Activated CD4-positive, alpha-beta T cell treated with anti-CD3 and anti-CD28 coated beads for 36 hours (primary cell): ENCODE measurements at regions of chr1 and their contacts with region 1.

Region 1: DNA sequence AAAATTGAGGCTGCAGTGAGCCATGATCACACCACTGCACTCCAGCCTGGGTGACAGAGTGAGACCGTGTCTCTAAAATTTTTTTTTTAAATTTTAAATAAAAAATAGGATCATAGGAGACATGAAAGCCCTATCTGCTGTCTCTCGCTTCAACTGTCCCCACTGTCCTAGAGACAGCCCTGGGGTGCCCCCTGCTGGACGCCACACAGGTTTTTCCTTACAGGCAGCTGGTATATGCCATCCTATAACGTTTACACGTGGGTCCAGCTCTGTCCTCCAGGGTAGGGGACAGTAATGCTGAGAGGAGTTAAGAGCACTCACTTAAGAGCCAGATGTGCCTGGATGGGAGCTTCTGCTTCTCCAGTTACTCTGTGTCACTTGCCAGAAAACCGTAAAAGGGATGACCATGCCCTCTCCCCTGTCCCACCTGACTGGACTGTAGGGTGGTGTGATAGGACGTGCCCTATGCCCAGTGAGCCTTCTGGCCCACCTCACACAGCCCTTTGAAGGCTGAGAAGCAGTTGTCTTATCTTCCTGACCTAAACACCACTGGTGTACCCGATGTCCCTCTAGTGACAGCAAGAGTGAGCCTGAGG is 8.5 kb downstream of the FBXO2 start:
- DNase-seq: peak; percentile 93
- ATAC-seq: peak; percentile 57
- H3K4me3 Mint-ChIP-seq: no peak overlapping the region
- H3K27ac Mint-ChIP-seq: no peak overlapping the region
- H3K4me1 Mint-ChIP-seq: peaks cover 10% of the 10 kb centered on the region
- H3K27me3 Mint-ChIP-seq: no peaks in the 10 kb centered on the region

Region 2: GRCh38 chr1:11099310-11100149 is 546.2 kb before region 1 on chr1 and contains the start of gene EXOSC10:
- CTCF ChIA-PET with region 1: interaction called, 3 read pairs
- POLR2A ChIA-PET with region 1: no interaction called
- intact Hi-C with region 1: loop called in 1 of 2 experiments (anchors 5 kb)
- DNase-seq: peak; percentile 97
- ATAC-seq: peak; percentile 98
- H3K4me3 Mint-ChIP-seq: peak within 1 kb of the TSS; percentile 95
- H3K27ac Mint-ChIP-seq: peak within 1 kb of the TSS; percentile 92
- H3K4me1 Mint-ChIP-seq: peaks cover 11% of the 10 kb centered on the region
- H3K27me3 Mint-ChIP-seq: no peaks in the 10 kb centered on the region
- total RNA-seq, gene EXOSC10: 74.3 to 89.6 TPM

Region 3: DNA sequence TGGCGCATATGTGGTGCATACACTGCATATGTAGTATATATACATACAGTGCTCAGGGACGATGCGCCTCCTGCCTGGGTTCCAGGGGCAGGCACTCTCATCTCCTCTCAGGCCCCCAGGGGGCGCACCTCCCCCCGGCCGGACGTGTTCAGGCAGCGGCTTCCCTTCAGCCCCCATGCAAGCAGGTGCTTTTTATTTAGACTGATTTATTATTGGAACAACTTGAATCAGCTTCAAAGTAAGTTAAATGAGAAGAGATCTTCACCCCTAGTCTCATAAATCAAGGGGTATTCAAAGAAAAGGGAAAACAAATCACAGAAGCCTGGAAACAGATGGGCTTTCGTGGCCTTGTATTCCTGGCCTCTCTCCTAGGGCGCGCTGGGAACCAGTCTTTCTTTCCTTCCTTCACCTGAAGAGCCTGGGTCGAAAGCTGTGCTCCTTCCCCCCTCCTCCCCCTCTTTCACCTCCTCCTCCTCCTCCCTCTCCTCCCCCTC is 308.1 kb before region 1 on chr1:
- CTCF ChIA-PET with region 1: interaction called, 5 read pairs
- POLR2A ChIA-PET with region 1: no interaction called
- intact Hi-C with region 1: loop called (anchors 1 to 5 kb)
- DNase-seq: peak; percentile 86
- ATAC-seq: peak; percentile 96
- H3K4me3 Mint-ChIP-seq: no peak overlapping the region
- H3K27ac Mint-ChIP-seq: no peak overlapping the region
- H3K4me1 Mint-ChIP-seq: no peaks in the 10 kb centered on the region
- H3K27me3 Mint-ChIP-seq: peaks cover 14% of the 10 kb centered on the region

Region 4: GRCh38 chr1:11634365-11635192 is 11.2 kb before region 1 on chr1:
- CTCF ChIA-PET with region 1: interaction called, 11 read pairs
- POLR2A ChIA-PET with region 1: no interaction called
- intact Hi-C with region 1: no loop called
- DNase-seq: no peak
- ATAC-seq: no peak
- H3K4me3 Mint-ChIP-seq: no peak overlapping the region
- H3K27ac Mint-ChIP-seq: no peak overlapping the region
- H3K4me1 Mint-ChIP-seq: no peaks in the 10 kb centered on the region
- H3K27me3 Mint-ChIP-seq: peaks cover 7% of the 10 kb centered on the region

Region 5: GRCh38 chr1:11673089-11673769 is 27.5 kb after region 1 on chr1:
- CTCF ChIA-PET with region 1: no interaction called
- POLR2A ChIA-PET with region 1: no interaction called
- intact Hi-C with region 1: no loop called
- DNase-seq: no peak
- ATAC-seq: no peak
- H3K4me3 Mint-ChIP-seq: no peak overlapping the region
- H3K27ac Mint-ChIP-seq: no peak overlapping the region
- H3K4me1 Mint-ChIP-seq: no peaks in the 10 kb centered on the region
- H3K27me3 Mint-ChIP-seq: no peaks in the 10 kb centered on the region

Region 6: DNA sequence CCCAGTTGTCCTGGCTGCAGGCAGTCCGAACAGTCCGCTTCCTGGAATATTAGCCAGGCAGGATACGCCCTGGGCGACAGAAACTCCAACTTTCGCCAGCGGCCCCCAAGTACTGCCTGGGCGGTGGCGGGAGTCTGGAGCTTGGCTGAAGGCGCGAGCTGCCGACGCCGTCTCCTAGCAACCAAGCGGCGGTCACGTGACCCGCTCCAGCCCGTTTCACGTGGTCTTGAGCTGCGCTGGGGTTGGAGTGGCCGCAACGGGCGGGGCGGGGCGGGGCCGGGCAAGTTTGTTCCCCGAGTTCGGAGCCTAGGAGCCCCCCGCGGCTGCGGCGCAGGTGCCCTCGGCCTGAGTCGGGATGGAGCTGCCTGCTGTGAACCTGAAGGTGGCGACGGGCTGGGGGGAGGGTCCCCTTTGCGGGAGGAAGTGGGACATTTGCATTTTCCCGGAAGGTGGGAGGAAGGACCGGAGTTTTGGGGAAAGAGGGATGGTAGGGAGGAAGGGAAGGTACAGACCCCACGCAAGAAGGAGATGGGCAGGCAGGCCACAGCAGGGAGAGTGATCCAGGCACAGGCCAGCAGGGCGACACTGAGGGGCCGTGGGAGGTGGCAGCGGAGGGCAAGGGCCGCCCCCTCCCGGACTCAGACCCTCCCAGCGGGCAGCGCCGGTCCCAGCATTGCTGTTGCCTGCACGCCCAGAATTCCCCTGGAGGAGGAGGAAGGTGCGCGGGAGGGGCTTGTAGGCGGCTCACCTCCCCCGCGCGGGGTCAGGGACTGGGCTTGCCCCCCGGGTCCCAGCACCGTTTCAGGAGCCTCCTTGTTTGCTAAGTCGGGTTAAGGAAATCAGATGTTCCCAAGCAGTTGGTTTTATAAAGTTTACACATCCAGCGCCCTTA is 90.3 kb after region 1 on chr1 and contains the start of gene AGTRAP:
- CTCF ChIA-PET with region 1: interaction called, 17 read pairs
- POLR2A ChIA-PET with region 1: no interaction called
- intact Hi-C with region 1: no loop called
- DNase-seq: peak; percentile 95
- ATAC-seq: peak; percentile 81
- H3K4me3 Mint-ChIP-seq: peak within 1 kb of the TSS; percentile 87
- H3K27ac Mint-ChIP-seq: peak within 1 kb of the TSS; percentile 82
- H3K4me1 Mint-ChIP-seq: peaks cover 56% of the 10 kb centered on the region
- H3K27me3 Mint-ChIP-seq: no peaks in the 10 kb centered on the region
- total RNA-seq, gene AGTRAP: 13.2 to 13.3 TPM

Region 7: DNA sequence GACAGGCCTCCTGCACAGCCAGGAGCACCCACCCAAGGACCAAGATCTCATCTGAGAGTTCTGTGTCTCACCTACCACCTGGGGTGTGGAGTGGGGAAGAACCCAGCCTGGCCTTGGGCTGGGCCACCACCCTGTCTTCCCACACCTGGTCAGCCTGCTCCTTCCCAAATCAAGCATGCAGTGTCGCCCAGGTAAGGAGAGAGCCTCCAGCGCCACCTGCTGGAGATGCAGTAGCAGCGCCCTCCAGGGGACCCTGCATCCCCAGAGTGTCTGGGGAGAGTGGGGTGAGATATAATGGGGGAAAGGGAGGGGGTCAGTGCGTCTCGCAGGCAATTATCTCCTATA is 248.1 kb after region 1 on chr1:
- CTCF ChIA-PET with region 1: no interaction called
- POLR2A ChIA-PET with region 1: no interaction called
- intact Hi-C with region 1: loop called in 1 of 2 experiments (anchors 5 kb)
- DNase-seq: peak; percentile 86
- ATAC-seq: peak; percentile 92
- H3K4me3 Mint-ChIP-seq: peak overlapping the region; percentile 16
- H3K27ac Mint-ChIP-seq: no peak overlapping the region
- H3K4me1 Mint-ChIP-seq: no peaks in the 10 kb centered on the region
- H3K27me3 Mint-ChIP-seq: peaks cover 23% of the 10 kb centered on the region

Region 8: DNA sequence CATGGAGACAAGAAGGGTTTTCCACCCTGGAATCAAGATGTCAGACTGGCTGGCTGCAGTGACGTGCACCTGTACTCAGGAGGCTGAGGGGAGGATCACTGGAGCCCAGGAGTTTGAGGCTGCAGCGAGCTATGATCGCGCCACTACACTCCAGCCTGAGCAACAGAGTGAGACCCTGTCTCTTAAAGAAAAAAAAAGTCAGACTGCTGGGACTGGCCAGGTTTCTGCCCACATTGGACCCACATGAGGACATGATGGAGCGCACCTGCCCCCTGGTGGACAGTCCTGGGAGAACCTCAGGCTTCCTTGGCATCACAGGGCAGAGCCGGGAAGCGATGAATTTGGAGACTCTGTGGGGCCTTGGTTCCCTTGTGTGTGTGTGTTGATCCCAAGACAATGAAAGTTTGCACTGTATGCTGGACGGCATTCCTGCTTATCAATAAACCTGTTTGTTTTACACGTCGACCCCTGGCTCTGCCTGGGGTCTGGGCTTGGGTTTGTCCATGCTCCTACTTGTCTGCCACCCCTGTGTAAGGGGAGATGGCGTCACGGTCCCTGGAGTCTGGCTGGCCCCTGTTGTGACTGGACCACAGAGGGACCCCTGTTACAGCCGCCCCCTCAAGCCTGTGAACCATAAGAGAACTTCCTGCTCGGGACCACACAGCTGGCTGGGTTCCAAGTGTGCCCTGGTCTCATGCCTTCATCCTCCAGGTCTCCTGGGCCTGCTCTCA is 563.2 kb after region 1 on chr1:
- CTCF ChIA-PET with region 1: no interaction called
- POLR2A ChIA-PET with region 1: no interaction called
- intact Hi-C with region 1: no loop called
- DNase-seq: peak; percentile 93
- ATAC-seq: peak; percentile 68
- H3K4me3 Mint-ChIP-seq: no peak overlapping the region
- H3K27ac Mint-ChIP-seq: peak overlapping the region; percentile 17
- H3K4me1 Mint-ChIP-seq: peaks cover 47% of the 10 kb centered on the region
- H3K27me3 Mint-ChIP-seq: no peaks in the 10 kb centered on the region